Dendritic cell treated with granulocyte-macrophage colony-stimulating factor and Interleukin-4, amounts not matched to agents 40 ng/mL and 50 ng/mL, for 4 days (primary cell): ENCODE measurements at regions of chr2 and their contacts with region 1.

Region 1: DNA sequence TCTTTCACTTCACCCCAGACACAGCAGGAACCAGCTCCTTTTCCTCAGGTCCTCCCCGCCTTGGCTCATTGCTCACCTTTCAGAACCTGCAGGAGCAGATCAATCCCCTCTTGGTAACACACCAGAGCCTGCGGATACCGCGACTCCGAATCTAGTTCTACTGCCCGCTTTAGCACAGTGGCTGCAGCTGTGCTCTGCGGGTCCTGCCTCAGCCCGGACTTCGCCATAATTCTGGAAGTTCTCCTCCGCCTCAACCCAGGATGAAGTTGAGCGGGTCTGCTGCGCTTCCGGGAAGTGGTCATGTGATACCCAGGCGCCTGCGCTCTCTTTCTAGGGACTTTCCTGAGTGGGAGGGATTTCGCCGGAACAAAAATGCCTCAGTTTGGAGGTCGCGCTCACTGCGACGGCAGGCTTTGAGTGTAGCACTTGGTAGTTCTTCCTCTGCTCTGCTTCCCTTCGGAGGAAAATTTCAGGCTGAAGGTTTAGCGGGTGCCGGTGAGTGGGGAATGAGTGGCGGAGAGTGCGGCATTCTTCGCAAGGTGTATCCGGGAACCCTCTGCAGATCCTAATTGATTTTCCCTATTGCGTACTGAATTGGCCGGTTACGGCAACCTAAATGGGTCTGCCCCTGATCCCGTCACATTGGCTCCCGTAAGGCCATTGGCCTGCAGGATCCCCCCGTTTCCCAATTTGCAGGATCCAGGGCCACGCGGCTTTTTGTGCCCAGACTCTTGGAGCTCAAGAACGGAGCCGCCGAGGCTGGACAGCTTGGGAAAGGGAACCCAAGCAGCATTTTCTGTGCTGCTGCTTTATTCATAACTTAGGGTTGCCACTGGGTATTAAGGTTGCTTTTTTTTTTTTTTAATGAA is at the starts of genes MITD1 and MRPL30:
- H3K4me3 Mint-ChIP-seq: peak within 1 kb of the TSS; percentile 97
- H3K27ac Mint-ChIP-seq: peak within 1 kb of the TSS; percentile 88
- H3K4me1 Mint-ChIP-seq: peaks cover 34% of the 10 kb centered on the region
- H3K27me3 Mint-ChIP-seq: no peaks in the 10 kb centered on the region

Region 2: GRCh38 chr2:98608116-98608999 is 572.6 kb before region 1 on chr2 and contains the starts of genes COA5 and UNC50:
- intact Hi-C with region 1: loop called (anchors 5 kb)
- H3K4me3 Mint-ChIP-seq: peak within 1 kb of the TSS; percentile 93
- H3K27ac Mint-ChIP-seq: peak within 1 kb of the TSS; percentile 99
- H3K4me1 Mint-ChIP-seq: peaks cover 51% of the 10 kb centered on the region
- H3K27me3 Mint-ChIP-seq: no peaks in the 10 kb centered on the region

Region 3: GRCh38 chr2:99085421-99085820 is 95.6 kb before region 1 on chr2:
- intact Hi-C with region 1: loop called (anchors 5 kb)
- H3K4me3 Mint-ChIP-seq: no peak overlapping the region
- H3K27ac Mint-ChIP-seq: no peak overlapping the region
- H3K4me1 Mint-ChIP-seq: no peaks in the 10 kb centered on the region
- H3K27me3 Mint-ChIP-seq: no peaks in the 10 kb centered on the region

Region 4: DNA sequence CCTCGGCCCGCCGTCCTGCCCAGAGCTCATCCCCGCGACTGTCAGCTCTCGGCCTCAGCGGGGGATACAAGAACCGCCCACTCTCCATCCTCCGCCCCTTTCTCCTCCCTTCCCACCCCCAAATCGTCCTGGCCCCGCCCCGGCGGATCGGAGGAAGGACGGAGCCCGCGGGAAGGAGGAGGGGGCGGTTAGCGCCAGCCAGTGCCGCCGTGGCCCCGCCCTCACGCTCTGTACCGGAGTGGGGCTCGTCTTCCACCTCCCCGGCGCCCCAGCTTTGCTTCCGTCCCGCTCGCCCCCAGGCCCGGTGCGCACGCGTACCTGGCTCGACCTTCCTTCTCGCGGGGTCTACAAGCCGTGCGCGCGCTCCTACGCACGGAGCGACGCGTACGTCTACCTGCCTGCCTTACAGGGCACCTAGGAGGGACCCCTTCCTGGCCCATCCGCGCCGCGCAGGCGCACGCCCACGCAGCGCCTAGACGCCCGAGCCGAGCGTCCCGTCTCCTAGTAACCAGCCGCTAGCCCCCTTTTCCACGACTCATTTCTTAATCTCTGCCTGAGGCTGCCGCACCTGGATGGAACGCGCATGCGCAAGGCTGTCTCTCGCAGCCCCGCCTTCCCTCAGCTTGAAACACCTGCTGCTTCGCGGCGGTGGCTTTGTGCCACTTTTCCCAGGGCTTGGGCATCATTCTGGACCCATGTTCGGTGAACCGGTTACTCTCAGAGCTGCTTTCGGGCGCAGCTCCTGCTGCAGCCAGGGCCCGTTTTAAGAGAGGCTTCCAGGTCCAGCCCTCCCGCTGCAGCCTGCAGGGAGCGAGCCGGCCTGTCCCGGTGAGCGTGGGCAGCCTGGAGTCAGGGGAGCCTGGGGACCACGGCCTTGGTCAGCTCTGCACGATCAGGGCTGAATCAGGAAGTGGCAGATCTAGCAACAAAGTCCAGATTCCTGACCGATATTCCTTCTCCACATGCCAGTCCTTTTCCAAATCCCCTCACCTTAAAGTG is 39.6 kb before region 1 on chr2 and contains the start of gene C2orf15:
- intact Hi-C with region 1: loop called (anchors 5 kb)
- H3K4me3 Mint-ChIP-seq: peak within 1 kb of the TSS; percentile 97
- H3K27ac Mint-ChIP-seq: peak within 1 kb of the TSS; percentile 88
- H3K4me1 Mint-ChIP-seq: peaks cover 32% of the 10 kb centered on the region
- H3K27me3 Mint-ChIP-seq: peaks cover 11% of the 10 kb centered on the region

Region 5: GRCh38 chr2:99154643-99155536 is 26.1 kb before region 1 on chr2 and contains the starts of genes LIPT1 and TSGA10:
- intact Hi-C with region 1: loop called (anchors 2 kb)
- H3K4me3 Mint-ChIP-seq: peak within 1 kb of the TSS; percentile 97
- H3K27ac Mint-ChIP-seq: peak within 1 kb of the TSS; percentile 94
- H3K4me1 Mint-ChIP-seq: peaks cover 37% of the 10 kb centered on the region
- H3K27me3 Mint-ChIP-seq: no peaks in the 10 kb centered on the region

Region 6: GRCh38 chr2:99489761-99490622 is 309.0 kb after region 1 on chr2 and contains the start of gene REV1:
- intact Hi-C with region 1: loop called (anchors 10 kb)
- H3K4me3 Mint-ChIP-seq: peak within 1 kb of the TSS; percentile 96
- H3K27ac Mint-ChIP-seq: peak within 1 kb of the TSS; percentile 97
- H3K4me1 Mint-ChIP-seq: peaks cover 19% of the 10 kb centered on the region
- H3K27me3 Mint-ChIP-seq: peaks cover 8% of the 10 kb centered on the region

Region 7: GRCh38 chr2:100008956-100009355 is 828.0 kb after region 1 on chr2:
- intact Hi-C with region 1: no loop called
- H3K4me3 Mint-ChIP-seq: peak overlapping the region; percentile 30
- H3K27ac Mint-ChIP-seq: peak overlapping the region; percentile 76
- H3K4me1 Mint-ChIP-seq: peaks cover 21% of the 10 kb centered on the region
- H3K27me3 Mint-ChIP-seq: no peaks in the 10 kb centered on the region